Endothelial cell of umbilical vein (primary cell): ENCODE measurements at regions of chr22 and their contacts with region 1.

Region 1: GRCh38 chr22:40818747-40819598 is at the start of gene SLC25A17:
- DNase-seq: peak; percentile 87
- H3K4me3 ChIP-seq: peak within 1 kb of the TSS; percentile 80 to 95 (median 83)
- H3K27ac ChIP-seq: peak within 1 kb of the TSS; percentile 46
- H3K4me1 ChIP-seq: peaks cover 15% of the 10 kb centered on the region
- H3K27me3 ChIP-seq: no peaks in the 10 kb centered on the region
- CTCF ChIP-seq: peak; percentile 34 to 61
- POLR2A ChIP-seq: peak; percentile 69
- total RNA-seq, gene SLC25A17: 24.9 and 25.8 TPM in 2 replicates

Region 2: DNA sequence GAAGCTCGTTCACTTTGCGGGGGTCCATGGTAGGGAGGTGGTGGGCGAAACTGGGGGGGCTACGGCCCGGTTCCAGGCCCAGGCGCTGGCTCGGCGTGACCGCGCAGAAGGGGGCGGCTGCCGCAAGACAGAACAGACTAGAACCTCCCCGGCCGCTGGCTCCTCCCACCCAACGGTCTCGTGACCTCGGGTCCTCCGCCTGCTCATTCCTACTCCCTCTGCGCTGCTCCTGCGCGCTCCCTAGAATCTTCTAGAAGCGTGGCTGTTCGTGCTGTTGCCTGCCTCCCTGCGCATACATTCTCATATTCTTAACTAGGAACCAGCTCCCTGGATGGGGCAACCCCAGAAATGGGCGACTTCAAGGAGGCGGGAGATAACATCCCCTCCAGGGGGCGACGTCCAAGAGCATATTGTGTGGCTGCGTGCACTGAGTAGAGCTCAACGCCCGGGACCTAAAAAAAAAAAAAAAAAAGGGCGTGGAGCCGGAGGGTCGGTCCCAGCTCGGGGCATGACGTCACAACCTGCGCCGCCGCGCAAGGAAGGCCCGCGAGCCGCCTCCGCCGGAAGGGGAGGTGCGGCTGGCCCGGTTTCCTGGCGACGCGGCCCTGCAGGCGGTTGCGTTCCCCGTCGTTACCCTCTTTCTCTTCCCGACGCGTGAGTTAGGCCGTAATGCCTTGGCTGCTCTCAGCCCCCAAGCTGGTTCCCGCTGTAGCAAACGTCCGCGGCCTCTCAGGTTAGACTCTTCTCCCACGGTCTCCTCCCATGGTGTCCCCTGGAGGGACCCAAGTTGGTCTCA is 37.7 kb after region 1 on chr22 and contains the starts of genes ST13 and XPNPEP3:
- CTCF ChIA-PET with region 1: interaction called, 3 read pairs
- POLR2A ChIA-PET with region 1: no interaction called
- dilution Hi-C with region 1: no loop called
- intact Hi-C with region 1: loop called (anchors 2 kb)
- DNase-seq: peak; percentile 95
- H3K4me3 ChIP-seq: peak within 1 kb of the TSS; percentile 80 to 99 (median 94)
- H3K27ac ChIP-seq: peak within 1 kb of the TSS; percentile 93
- H3K4me1 ChIP-seq: peaks cover 27% of the 10 kb centered on the region
- H3K27me3 ChIP-seq: no peaks in the 10 kb centered on the region
- CTCF ChIP-seq: peak in 1 of 2 donors; percentile 27
- POLR2A ChIP-seq: peak; percentile 76
- total RNA-seq, gene ST13: 249 and 250 TPM in 2 replicates
- total RNA-seq, gene XPNPEP3: 21.2 TPM in 2 replicates